ENCODE measurements at regions of chr19 and their contacts with region 1.

Region 1: GRCh38 chr19:11041966-11042627 is 47.2 kb upstream of the LDLR start:
- DNase-seq: no peak

Region 2: DNA sequence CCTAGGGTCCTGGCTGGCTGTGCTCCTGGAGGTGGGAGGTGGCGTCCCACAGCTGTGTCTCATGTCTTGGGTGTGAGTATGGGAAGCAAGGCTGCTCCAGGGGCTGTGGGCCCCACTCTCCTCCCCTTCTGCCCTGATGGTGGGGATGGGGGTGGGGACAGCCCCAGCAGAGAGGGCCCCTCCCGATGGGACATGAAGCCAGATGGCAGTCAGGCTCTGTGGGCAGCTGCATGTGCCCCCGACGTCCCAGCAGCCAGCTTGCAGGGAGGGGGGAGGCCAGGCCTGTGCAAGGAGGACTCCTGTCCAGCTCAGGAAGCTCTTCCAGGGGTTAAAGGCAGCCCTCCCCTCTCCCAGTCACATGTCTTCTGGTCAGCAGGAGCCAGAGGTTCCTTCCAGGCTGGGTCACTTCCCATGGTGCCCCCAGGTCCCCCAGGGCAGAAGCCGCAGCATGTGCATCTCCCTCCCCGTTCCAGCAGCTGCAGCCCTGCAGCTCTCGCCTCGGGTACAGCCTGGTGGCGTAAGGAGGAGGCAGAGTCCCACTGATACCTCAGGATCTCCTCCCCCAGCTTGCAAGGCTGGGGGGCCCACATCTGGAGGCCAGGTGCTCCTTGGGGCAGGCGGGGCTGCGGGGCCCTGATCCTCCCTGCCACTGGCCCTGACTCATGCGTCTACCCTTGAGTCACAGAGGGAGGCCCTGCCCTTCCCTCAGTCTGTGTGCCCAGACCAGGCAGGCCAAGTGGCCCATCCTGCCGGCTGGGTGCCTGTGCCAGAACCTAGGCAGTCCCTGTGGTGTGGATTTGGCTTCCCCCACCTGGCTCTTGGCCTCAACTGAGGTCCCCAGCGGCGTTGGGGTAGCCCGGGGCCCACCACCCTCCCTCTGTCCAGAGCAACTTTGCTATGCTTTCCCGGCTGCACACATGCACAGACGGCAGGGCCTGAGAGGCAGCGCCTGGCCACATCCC is 126.7 kb before region 1 on chr19:
- in situ Hi-C with region 1: loop called (anchors 10 kb)
- DNase-seq: no peak